ENCODE measurements at regions of chr22 and their contacts with region 1.

Region 1: GRCh38 chr22:37643225-37643847 is 3.9 kb downstream of the SH3BP1 start:
- DNase-seq: peak; percentile 77
- H3K4me3 Mint-ChIP-seq: no peak overlapping the region
- H3K27ac Mint-ChIP-seq: no peak overlapping the region
- H3K4me1 Mint-ChIP-seq: peaks cover 7% of the 10 kb centered on the region
- H3K27me3 Mint-ChIP-seq: no peaks in the 10 kb centered on the region
- CTCF ChIP-seq: peak; percentile 92

Region 2: DNA sequence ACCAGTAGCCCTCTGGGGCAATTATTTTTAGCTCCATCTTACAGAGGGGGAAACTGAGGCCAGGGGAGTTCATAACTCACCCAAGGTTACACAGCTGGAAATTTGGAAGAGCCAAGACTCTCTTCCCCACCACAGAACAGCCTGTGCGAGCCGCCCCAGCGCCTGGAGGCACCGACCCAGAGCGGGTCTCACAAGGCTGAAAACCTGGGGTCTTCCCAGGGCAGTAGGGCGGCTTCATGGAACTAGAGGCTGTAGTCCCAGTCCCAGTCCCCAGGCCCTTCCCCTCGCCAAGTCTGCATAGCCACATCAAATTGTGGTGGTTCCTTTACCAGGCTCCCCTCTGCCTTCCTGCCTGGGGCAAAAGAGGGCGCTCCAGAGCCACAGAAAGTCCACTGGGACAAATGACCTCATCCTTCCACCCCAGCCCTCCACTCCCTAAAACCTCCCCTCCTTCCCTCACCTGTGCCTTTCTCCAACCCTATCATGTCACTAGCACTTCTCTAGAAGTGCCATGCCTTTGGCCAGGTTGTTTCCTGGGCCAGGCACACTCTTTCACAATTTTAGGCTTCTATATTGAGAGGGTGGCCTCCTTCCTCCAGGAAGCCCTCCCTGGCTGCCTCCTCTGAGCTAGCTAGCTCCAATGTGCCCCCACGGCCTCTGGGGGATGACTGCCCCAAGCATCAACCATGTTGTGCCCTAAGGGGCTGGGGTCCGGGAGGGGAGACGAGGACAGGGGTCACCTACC is 98.2 kb before region 1 on chr22:
- CTCF ChIA-PET with region 1: no interaction called
- POLR2A ChIA-PET with region 1: no interaction called
- intact Hi-C with region 1: no loop called
- DNase-seq: peak; percentile 91
- H3K4me3 Mint-ChIP-seq: peak overlapping the region; percentile 50
- H3K27ac Mint-ChIP-seq: peak overlapping the region; percentile 78
- H3K4me1 Mint-ChIP-seq: peaks cover 28% of the 10 kb centered on the region
- H3K27me3 Mint-ChIP-seq: no peaks in the 10 kb centered on the region
- CTCF ChIP-seq: peak; percentile 79

Region 3: DNA sequence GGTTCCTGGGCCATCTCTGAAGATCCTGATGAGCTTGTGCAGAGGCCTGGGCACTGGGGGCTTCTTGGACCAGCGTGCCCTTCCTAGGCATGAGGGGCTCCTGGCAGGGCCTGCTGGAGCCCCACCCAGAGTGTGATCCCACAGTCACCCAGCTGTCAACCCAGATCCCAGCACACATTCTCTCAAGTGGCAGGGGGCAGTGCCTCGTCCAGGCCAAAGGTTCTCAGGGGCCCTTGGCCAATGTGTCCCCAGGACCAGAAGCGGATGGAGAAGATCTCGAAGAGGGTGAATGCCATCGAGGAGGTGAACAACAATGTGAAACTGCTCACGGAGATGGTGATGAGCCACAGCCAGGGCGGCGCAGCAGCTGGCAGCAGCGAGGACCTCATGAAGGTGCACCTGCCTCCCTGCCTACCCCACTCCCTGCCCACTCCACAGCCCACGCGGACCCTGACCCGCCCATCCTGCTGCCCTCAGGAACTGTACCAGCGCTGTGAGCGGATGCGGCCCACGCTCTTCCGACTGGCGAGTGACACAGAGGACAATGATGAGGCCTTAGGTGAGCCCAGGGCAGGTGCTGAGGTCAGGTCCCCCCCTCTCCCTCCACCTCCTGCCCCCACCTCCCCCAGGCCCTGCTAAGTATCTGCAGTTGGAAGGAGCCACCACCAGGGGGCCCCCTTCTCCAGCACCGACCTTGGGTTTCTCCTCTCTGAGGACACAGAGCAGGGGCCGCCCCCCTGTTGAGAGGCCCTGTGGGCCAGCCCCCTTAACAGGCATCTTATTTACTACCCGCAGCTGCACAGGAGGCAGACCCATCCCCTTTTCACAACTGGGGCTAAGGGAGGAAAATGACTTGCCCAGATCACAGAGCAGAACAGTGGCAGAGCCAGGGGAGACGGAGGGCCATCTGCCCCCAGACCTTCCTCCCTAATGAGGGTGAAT is 20.0 kb before region 1 on chr22:
- CTCF ChIA-PET with region 1: interaction called, 112 read pairs
- POLR2A ChIA-PET with region 1: no interaction called
- intact Hi-C with region 1: no loop called
- DNase-seq: peak; percentile 63
- H3K4me3 Mint-ChIP-seq: no peak overlapping the region
- H3K27ac Mint-ChIP-seq: no peak overlapping the region
- H3K4me1 Mint-ChIP-seq: no peaks in the 10 kb centered on the region
- H3K27me3 Mint-ChIP-seq: no peaks in the 10 kb centered on the region
- CTCF ChIP-seq: peak; percentile 70

Region 4: GRCh38 chr22:37676736-37677492 is 33.6 kb after region 1 on chr22:
- CTCF ChIA-PET with region 1: interaction called, 113 read pairs
- POLR2A ChIA-PET with region 1: interaction called, 13 read pairs
- intact Hi-C with region 1: loop called (anchors 1 kb)
- DNase-seq: peak; percentile 94
- H3K4me3 Mint-ChIP-seq: peak overlapping the region; percentile 75
- H3K27ac Mint-ChIP-seq: peak overlapping the region; percentile 66
- H3K4me1 Mint-ChIP-seq: peaks cover 25% of the 10 kb centered on the region
- H3K27me3 Mint-ChIP-seq: no peaks in the 10 kb centered on the region
- CTCF ChIP-seq: no peak

Region 5: DNA sequence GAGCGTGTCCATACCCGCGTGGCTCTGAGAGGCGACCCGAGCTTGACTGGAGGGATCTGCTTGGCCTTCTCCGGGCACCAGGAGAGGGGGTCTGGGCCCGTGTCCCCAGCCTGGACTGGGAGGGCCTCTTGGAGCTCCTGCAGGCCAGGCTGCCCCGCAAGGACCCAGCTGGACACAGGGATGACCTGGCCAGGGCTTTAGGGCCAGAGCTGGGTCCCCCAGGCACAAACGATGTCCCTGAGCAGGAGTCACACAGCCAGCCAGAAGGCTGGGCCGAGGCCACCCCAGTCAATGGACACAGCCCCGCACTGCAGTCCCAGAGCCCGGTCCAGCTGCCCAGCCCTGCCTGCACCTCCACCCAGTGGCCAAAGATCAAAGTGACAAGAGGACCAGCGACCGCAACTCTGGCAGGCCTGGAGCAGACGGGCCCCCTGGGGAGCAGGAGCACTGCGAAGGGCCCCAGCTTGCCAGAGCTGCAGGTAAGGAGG is 91.7 kb after region 1 on chr22:
- CTCF ChIA-PET with region 1: interaction called, 11 read pairs
- POLR2A ChIA-PET with region 1: no interaction called
- intact Hi-C with region 1: loop called (anchors 1 kb)
- DNase-seq: no peak
- H3K4me3 Mint-ChIP-seq: no peak overlapping the region
- H3K27ac Mint-ChIP-seq: no peak overlapping the region
- H3K4me1 Mint-ChIP-seq: no peaks in the 10 kb centered on the region
- H3K27me3 Mint-ChIP-seq: no peaks in the 10 kb centered on the region
- CTCF ChIP-seq: peak; percentile 18

Region 6: DNA sequence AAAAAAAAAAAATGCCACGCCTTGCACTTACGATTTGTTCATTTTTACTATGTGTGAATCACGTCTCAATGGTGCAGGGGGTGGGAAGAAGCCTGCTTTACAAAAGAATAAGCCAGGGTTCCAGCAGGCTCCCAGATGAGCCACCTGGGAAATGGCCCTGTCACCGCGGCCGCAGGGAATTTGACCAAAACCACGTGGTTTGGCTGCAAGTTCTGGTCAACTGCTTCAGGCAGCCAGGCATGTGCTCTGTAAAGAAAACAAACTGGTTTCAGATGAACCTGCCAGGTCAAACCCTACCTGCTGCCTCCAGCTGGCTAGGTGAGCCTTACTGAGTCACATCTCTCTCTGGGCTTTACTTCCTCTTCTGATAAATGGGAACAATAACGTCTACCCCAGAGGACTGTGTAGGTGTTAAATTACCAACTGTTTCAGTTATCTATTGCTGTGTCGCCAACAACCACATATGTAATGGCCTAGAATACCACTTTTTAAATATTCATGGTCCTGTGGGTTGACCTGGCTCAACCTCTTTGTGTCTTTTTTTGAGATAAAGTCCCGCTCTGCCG is 133.9 kb after region 1 on chr22:
- CTCF ChIA-PET with region 1: interaction called, 16 read pairs
- POLR2A ChIA-PET with region 1: no interaction called
- intact Hi-C with region 1: no loop called
- DNase-seq: peak; percentile 97
- H3K4me3 Mint-ChIP-seq: peak overlapping the region; percentile 51
- H3K27ac Mint-ChIP-seq: peak overlapping the region; percentile 76
- H3K4me1 Mint-ChIP-seq: peaks cover 20% of the 10 kb centered on the region
- H3K27me3 Mint-ChIP-seq: no peaks in the 10 kb centered on the region
- CTCF ChIP-seq: no peak

Region 7: GRCh38 chr22:37862570-37863325 is 219.4 kb after region 1 on chr22:
- CTCF ChIA-PET with region 1: interaction called, 10 read pairs
- POLR2A ChIA-PET with region 1: no interaction called
- intact Hi-C with region 1: no loop called
- DNase-seq: no peak
- H3K4me3 Mint-ChIP-seq: no peak overlapping the region
- H3K27ac Mint-ChIP-seq: peak overlapping the region; percentile 49
- H3K4me1 Mint-ChIP-seq: peaks cover 10% of the 10 kb centered on the region
- H3K27me3 Mint-ChIP-seq: no peaks in the 10 kb centered on the region
- CTCF ChIP-seq: no peak